Pancreas (tissue), 10 donors: ENCODE measurements at regions of chr11 and their contacts with region 1.

Region 1: GRCh38 chr11:108743851-108744250 is 79.0 kb downstream of the DDX10 start:
- DNase-seq: no peak
- ATAC-seq: no peak
- H3K4me3 ChIP-seq: no peak overlapping the region
- H3K27ac ChIP-seq: no peak overlapping the region
- H3K4me1 ChIP-seq: no peaks in the 10 kb centered on the region
- H3K27me3 ChIP-seq: no peaks in the 10 kb centered on the region
- CTCF ChIP-seq: no peak

Region 2: GRCh38 chr11:108654994-108655631 is 88.7 kb before region 1 on chr11:
- intact Hi-C with region 1: no loop called
- DNase-seq: peak in 2 of 6 donors; percentile 24 to 56
- ATAC-seq: peak; percentile 69 to 92 (median 84)
- H3K4me3 ChIP-seq: no peak overlapping the region
- H3K27ac ChIP-seq: no peak overlapping the region
- H3K4me1 ChIP-seq: no peaks in the 10 kb centered on the region
- H3K27me3 ChIP-seq: peaks cover 0 to 4% (median 0%) of the 10 kb centered on the region in 4 donors
- CTCF ChIP-seq: peak in 3 of 4 donors; percentile 36 to 45 (median 36)

Region 3: DNA sequence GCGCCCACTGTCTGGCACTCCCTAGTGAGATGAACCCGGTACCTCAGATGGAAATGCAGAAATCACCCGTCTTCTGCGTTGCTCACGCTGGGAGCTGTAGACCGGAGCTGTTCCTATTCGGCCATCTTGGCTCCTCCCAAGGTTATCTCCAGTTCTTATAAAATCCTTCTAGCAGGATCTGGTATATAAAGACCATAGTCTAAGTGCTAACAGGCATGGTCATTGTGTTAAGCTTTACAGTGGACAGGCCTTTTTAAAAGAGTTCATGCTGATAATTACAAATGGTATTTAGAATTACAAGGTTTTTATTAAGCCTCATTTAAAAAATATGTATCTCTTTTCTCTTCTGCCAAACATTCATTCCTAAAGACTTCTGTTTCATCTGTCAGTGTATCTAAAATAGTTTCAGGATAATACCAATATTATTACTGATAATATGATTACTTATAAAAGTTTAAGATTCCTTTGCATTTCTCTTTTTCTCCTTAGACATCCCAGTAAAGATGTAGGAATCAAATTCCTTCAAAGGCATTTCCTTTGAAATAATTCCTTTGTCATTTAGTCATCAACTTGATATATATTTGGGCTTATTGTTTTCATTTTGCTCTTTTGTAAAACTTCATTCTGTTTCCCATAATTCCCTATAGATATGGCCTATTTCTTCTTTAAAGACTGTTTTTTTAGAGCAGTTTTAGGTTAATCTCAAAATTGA is 58.3 kb before region 1 on chr11:
- intact Hi-C with region 1: loop called in 1 of 3 experiments (anchors 10 kb)
- DNase-seq: no peak
- ATAC-seq: no peak
- H3K4me3 ChIP-seq: no peak overlapping the region
- H3K27ac ChIP-seq: no peak overlapping the region
- H3K4me1 ChIP-seq: no peaks in the 10 kb centered on the region
- H3K27me3 ChIP-seq: no peaks in the 10 kb centered on the region
- CTCF ChIP-seq: no peak

Region 4: DNA sequence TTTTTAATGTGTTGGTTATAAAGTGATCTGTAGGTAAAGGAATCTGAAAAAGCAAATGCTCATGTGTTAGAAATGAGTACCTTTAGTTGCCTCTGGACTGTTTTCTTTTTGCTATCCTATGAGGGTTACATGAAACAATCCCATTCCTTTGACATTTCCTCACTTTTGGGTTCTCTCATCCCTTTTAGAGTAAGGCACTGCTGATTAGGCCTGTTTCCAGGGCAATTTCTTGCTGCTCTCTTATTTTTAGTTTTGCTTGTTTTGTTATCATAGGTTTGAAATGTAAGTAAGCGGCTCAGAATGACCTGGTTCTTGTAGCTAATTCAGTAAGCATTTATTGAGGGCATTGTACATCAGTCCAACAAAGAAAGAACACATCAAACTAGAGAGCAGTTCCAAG is 59.9 kb after region 1 on chr11:
- intact Hi-C with region 1: no loop called
- DNase-seq: no peak
- ATAC-seq: peak in 2 of 4 donors; percentile 9 to 25
- H3K4me3 ChIP-seq: no peak overlapping the region
- H3K27ac ChIP-seq: no peak overlapping the region
- H3K4me1 ChIP-seq: peaks cover 8 to 16% (median 14%) of the 10 kb centered on the region in 3 donors
- H3K27me3 ChIP-seq: no peaks in the 10 kb centered on the region
- CTCF ChIP-seq: no peak